ENCODE measurements at regions of chr6 and their contacts with region 1.

Region 1: GRCh38 chr6:154247119-154247861 is 109.3 kb downstream of the IPCEF1 start:
- DNase-seq: peak in 19 of 35 experiments; percentile 15 to 66 (median 33)
- ATAC-seq: peak; percentile 43 to 56 (median 52)
- H3K4me3 ChIP-seq: peak overlapping the region; percentile 51 to 77
- H3K4me3 Mint-ChIP-seq: peak overlapping the region; percentile 92 to 96 (median 93)
- H3K27ac ChIP-seq: peak overlapping the region; percentile 88
- H3K27ac Mint-ChIP-seq: peak overlapping the region; percentile 93 to 97
- H3K4me1 ChIP-seq: peaks cover 48 to 64% of the 10 kb centered on the region in 2 experiments
- H3K4me1 Mint-ChIP-seq: peaks cover 70 to 95% (median 84%) of the 10 kb centered on the region in 3 donors
- H3K27me3 ChIP-seq: no peaks in the 10 kb centered on the region
- H3K27me3 Mint-ChIP-seq: no peaks in the 10 kb centered on the region

Region 2: DNA sequence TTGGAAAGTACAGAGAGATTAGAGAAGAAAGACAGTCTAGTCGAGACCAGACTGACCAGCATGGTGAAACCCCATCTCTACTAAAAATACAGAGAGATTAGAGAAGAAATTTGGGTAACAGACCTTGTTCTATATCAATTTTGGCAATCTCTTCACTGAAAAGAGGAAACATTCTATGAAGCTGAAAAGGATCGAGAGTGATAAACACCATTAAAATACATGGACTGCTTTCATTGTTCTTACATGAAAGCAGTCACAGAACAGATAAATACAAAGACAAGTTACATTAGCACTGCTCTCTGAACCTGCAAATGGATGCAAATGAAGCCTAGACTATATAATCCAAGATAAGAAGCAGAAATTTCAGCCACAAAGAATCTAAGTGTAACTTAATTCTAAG is 216.6 kb before region 1 on chr6:
- CTCF ChIA-PET with region 1: no interaction called
- POLR2A ChIA-PET with region 1: no interaction called
- DNase-seq: no peak
- ATAC-seq: no peak
- H3K4me3 ChIP-seq: no peak overlapping the region
- H3K4me3 Mint-ChIP-seq: no peak overlapping the region
- H3K27ac ChIP-seq: no peak overlapping the region
- H3K27ac Mint-ChIP-seq: no peak overlapping the region
- H3K4me1 ChIP-seq: no peaks in the 10 kb centered on the region
- H3K4me1 Mint-ChIP-seq: no peaks in the 10 kb centered on the region
- H3K27me3 ChIP-seq: peaks cover 0 to 8% of the 10 kb centered on the region in 2 experiments
- H3K27me3 Mint-ChIP-seq: peaks cover 4 to 14% of the 10 kb centered on the region in 2 donors

Region 3: DNA sequence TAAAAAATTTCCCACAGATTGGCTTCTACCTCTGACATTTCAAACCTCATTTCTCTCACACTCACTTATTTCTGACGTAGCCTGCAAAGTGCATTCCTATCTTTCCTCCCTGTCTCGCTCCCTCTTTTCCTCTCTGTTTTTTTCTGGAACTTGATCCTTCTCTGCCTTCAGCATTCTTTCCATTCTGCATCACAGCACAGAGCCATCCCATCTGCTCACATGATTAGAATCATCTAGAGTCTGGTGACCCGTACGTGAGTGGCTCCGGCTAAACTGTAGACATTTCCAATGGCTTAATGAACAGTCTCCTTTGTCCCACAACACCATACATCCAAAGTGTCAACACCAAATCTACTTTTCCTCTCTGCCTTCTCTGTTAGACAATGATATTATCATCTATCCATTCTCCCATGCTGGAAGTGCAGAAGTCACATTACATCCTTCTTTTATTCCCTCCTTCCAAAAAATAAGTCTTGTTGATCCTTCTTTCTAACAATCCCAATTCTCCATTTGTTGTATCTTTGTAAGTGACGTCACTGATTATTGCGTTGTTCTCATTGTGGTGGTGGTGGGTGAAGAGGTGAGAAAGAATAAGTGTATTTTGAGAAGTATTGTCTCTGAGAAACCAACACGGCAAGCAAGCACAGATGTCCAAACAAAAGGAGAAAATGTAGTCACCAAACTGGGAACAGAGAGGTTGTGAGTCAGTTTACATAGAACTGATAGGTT is 166.7 kb before region 1 on chr6:
- CTCF ChIA-PET with region 1: no interaction called
- POLR2A ChIA-PET with region 1: no interaction called
- DNase-seq: no peak
- ATAC-seq: no peak
- H3K4me3 ChIP-seq: no peak overlapping the region
- H3K4me3 Mint-ChIP-seq: no peak overlapping the region
- H3K27ac ChIP-seq: no peak overlapping the region
- H3K27ac Mint-ChIP-seq: no peak overlapping the region
- H3K4me1 ChIP-seq: no peaks in the 10 kb centered on the region
- H3K4me1 Mint-ChIP-seq: no peaks in the 10 kb centered on the region
- H3K27me3 ChIP-seq: peaks cover 0 to 2% of the 10 kb centered on the region in 2 experiments
- H3K27me3 Mint-ChIP-seq: peaks cover 6 to 13% of the 10 kb centered on the region in 2 donors

Region 4: DNA sequence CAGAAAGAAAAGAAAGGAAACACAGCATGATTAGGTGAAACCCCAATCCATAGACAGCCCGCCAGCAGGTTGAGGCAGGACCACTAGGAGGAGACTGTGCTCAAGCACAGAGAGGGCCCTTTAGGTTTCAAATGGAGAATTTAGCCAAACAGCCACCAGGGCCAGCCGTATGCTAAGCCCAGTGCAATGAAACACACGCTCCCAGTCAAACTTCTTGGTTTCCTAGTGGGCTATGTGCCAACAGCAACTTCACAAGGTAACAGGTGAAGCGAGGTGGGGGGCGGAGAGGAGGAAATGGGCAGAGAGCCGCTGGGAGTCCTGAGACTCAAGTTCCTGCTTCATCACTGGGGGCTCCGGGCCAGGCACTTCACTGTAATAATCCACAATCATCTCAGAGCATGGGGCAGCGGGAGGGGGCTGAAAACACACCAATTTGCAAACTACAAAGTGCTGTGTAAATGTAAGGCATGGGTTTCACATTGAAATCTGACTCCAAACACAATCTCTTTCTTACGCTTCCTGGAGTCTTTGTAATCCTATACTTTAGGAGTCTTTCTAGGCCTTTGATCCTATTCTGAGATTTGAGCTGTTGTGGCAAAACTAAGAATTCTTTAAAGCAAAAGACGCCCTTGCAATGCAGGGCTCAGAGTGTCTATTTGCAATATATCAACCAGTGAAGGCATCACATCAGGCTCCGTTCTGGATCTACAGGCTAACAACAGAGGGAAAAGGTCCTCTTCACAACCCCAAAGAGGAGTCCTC is 91.0 kb before region 1 on chr6:
- CTCF ChIA-PET with region 1: interaction called in 1 of 2 experiments, 26 read pairs
- POLR2A ChIA-PET with region 1: interaction called, 4 to 5 read pairs
- DNase-seq: peak; percentile 33 to 80 (median 56)
- ATAC-seq: peak; percentile 79 to 91 (median 84)
- H3K4me3 ChIP-seq: peak overlapping the region; percentile 31 to 32
- H3K4me3 Mint-ChIP-seq: peak overlapping the region; percentile 69 to 80 (median 76)
- H3K27ac ChIP-seq: peak overlapping the region; percentile 84
- H3K27ac Mint-ChIP-seq: peak overlapping the region; percentile 95 to 97
- H3K4me1 ChIP-seq: peaks cover 22 to 32% of the 10 kb centered on the region in 2 experiments
- H3K4me1 Mint-ChIP-seq: peaks cover 53 to 62% (median 60%) of the 10 kb centered on the region in 3 donors
- H3K27me3 ChIP-seq: no peaks in the 10 kb centered on the region
- H3K27me3 Mint-ChIP-seq: no peaks in the 10 kb centered on the region

Region 5: GRCh38 chr6:154229786-154230185 is 17.5 kb before region 1 on chr6:
- CTCF ChIA-PET with region 1: interaction called in 1 of 2 experiments, 38 read pairs
- POLR2A ChIA-PET with region 1: interaction called, 4 read pairs
- DNase-seq: peak in 1 of 35 experiments; percentile 69
- ATAC-seq: peak; percentile 42 to 60 (median 53)
- H3K4me3 ChIP-seq: peak overlapping the region in 1 of 2 donors; percentile 24
- H3K4me3 Mint-ChIP-seq: peak overlapping the region; percentile 72 to 85 (median 80)
- H3K27ac ChIP-seq: peak overlapping the region; percentile 54
- H3K27ac Mint-ChIP-seq: peak overlapping the region; percentile 84 to 85
- H3K4me1 ChIP-seq: peaks cover 31 to 45% of the 10 kb centered on the region in 2 experiments
- H3K4me1 Mint-ChIP-seq: peaks cover 83 to 90% (median 87%) of the 10 kb centered on the region in 3 donors
- H3K27me3 ChIP-seq: no peaks in the 10 kb centered on the region
- H3K27me3 Mint-ChIP-seq: no peaks in the 10 kb centered on the region

Region 6: DNA sequence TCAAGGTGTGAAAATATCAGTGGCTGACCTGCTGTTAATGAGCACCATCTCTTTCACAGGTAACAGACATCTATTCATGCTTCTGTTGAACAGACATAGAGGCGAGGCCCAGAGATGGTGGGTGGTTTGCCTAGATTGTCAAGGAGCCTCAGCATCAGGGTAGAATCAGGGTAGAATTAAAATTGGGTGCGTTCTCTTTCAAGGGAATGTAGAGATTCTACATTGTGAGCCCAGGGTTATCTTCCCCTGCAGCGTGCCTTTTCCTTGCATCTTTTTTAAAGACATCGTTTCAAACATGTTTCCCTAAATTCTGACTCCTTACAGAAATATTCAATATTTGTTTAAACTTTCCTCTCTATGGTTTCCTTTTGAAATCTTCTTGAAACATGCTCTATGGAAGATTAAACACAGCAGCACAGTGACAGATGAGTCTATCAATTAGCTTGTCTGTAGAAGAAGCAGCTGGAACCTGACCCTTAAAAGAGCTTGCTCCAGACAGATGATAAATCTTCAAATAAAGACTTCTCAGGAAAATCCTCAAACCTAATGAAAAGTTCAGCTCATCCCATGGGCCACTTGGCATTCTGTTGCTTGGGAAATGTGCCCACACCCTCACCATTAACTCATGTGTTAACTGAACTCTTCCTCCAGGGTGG is 10.5 kb before region 1 on chr6:
- CTCF ChIA-PET with region 1: interaction called in 1 of 2 experiments, 38 read pairs
- POLR2A ChIA-PET with region 1: interaction called, 6 to 11 read pairs
- DNase-seq: no peak
- ATAC-seq: no peak
- H3K4me3 ChIP-seq: no peak overlapping the region
- H3K4me3 Mint-ChIP-seq: no peak overlapping the region
- H3K27ac ChIP-seq: no peak overlapping the region
- H3K27ac Mint-ChIP-seq: peak overlapping the region; percentile 2
- H3K4me1 ChIP-seq: peaks cover 32 to 45% of the 10 kb centered on the region in 2 experiments
- H3K4me1 Mint-ChIP-seq: peaks cover 84 to 88% (median 84%) of the 10 kb centered on the region in 3 donors
- H3K27me3 ChIP-seq: no peaks in the 10 kb centered on the region
- H3K27me3 Mint-ChIP-seq: no peaks in the 10 kb centered on the region

Region 7: DNA sequence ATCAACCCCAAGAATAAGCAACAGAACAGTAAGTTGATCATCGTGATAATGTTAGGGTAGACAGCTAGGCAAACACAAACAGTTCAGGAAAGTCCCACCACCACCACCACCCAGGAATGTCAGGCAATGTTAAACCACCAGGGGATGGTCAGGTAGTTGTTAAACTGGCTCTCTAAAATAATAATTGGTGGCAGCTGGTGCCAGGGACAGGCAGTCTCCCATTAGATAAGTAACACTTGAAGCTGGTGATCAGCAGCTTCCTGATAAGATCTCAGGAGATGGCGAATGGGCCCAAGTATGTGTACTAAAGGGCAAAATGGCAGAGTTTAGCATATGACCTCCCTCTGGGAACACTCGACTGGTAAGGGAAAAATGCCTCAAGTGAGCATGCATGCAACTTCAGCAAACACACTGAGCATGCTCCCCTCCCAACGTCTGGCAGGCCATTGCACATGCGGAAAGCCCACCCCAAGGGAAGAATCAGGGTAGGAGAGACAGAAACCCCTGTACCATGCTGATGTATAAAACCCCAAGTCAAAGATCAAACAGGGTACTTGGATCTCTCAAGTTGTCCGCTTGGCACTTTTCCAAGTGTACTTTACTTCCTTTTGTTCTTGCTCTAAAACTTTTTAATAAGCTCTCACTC is 42.7 kb after region 1 on chr6:
- CTCF ChIA-PET with region 1: no interaction called
- POLR2A ChIA-PET with region 1: interaction called, 3 to 10 read pairs
- DNase-seq: no peak
- ATAC-seq: no peak
- H3K4me3 ChIP-seq: no peak overlapping the region
- H3K4me3 Mint-ChIP-seq: no peak overlapping the region
- H3K27ac ChIP-seq: no peak overlapping the region
- H3K27ac Mint-ChIP-seq: no peak overlapping the region
- H3K4me1 ChIP-seq: no peaks in the 10 kb centered on the region
- H3K4me1 Mint-ChIP-seq: no peaks in the 10 kb centered on the region
- H3K27me3 ChIP-seq: no peaks in the 10 kb centered on the region
- H3K27me3 Mint-ChIP-seq: no peaks in the 10 kb centered on the region

Measured in T-cell (primary cell).